ENCODE measurements at regions of chr4 and their contacts with region 1.

Region 1: GRCh38 chr4:88104902-88105610 is 53.4 kb downstream of the ABCG2 start:
- DNase-seq: no peak
- ATAC-seq: no peak
- H3K4me3 ChIP-seq: no peak overlapping the region
- H3K4me3 Mint-ChIP-seq: no peak overlapping the region
- H3K27ac ChIP-seq: no peak overlapping the region
- H3K27ac Mint-ChIP-seq: no peak overlapping the region
- H3K4me1 ChIP-seq: no peaks in the 10 kb centered on the region
- H3K4me1 Mint-ChIP-seq: no peaks in the 10 kb centered on the region
- H3K27me3 ChIP-seq: no peaks in the 10 kb centered on the region
- H3K27me3 Mint-ChIP-seq: peaks cover 3% of the 10 kb centered on the region
- CTCF ChIP-seq: no peak

Region 2: DNA sequence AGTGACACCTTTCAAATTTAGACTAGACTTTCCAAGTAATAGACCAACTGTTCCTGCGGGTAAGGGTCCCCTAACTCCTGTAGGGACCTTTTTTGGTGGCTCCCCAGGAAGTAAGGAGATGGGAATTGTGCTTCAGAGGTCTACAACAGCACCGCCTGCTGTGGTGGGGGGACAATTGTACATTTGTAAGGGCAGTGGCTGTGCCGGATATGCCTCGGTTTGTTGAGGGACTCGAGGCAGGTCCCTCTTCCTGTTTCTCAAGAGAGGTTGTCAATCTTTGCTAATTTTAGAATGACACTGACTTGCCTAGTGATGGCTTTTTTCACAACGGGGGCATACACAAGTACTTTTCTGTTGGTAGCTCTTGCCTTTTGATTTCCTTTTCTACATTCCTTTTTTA is 698.6 kb before region 1 on chr4:
- CTCF ChIA-PET with region 1: no interaction called
- POLR2A ChIA-PET with region 1: no interaction called
- intact Hi-C with region 1: no loop called
- DNase-seq: peak in 2 of 9 experiments; percentile 9 to 42
- ATAC-seq: peak; percentile 57
- H3K4me3 ChIP-seq: no peak overlapping the region
- H3K4me3 Mint-ChIP-seq: peak overlapping the region; percentile 69
- H3K27ac ChIP-seq: peak overlapping the region in 1 of 2 experiments; percentile 23
- H3K27ac Mint-ChIP-seq: peak overlapping the region; percentile 86
- H3K4me1 ChIP-seq: peaks cover 11% of the 10 kb centered on the region
- H3K4me1 Mint-ChIP-seq: peaks cover 22% of the 10 kb centered on the region
- H3K27me3 ChIP-seq: no peaks in the 10 kb centered on the region
- H3K27me3 Mint-ChIP-seq: peaks cover 23% of the 10 kb centered on the region
- CTCF ChIP-seq: no peak

Region 3: DNA sequence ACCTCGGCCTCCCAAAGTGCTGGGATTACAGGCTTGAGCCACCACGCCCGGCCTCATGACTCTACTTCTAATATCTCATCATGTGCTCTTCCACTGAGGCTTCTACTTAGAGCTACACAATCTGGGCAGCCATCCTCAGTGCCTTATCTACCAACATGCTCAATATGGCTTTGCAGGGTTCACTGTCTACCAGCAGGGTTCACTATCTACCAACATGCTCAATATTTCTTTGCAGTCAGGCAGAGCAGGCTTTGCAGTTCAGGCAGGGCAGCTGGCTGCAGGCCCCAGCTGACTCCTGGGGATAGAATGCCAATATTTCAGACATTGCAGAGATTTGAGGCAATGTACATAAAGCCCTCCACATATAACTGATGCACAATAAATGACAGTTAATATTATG is 50.2 kb before region 1 on chr4:
- CTCF ChIA-PET with region 1: no interaction called
- POLR2A ChIA-PET with region 1: no interaction called
- intact Hi-C with region 1: no loop called
- DNase-seq: peak in 1 of 9 experiments; percentile 2
- ATAC-seq: no peak
- H3K4me3 ChIP-seq: no peak overlapping the region
- H3K4me3 Mint-ChIP-seq: no peak overlapping the region
- H3K27ac ChIP-seq: no peak overlapping the region
- H3K27ac Mint-ChIP-seq: no peak overlapping the region
- H3K4me1 ChIP-seq: no peaks in the 10 kb centered on the region
- H3K4me1 Mint-ChIP-seq: no peaks in the 10 kb centered on the region
- H3K27me3 ChIP-seq: no peaks in the 10 kb centered on the region
- H3K27me3 Mint-ChIP-seq: no peaks in the 10 kb centered on the region
- CTCF ChIP-seq: no peak

Region 4: DNA sequence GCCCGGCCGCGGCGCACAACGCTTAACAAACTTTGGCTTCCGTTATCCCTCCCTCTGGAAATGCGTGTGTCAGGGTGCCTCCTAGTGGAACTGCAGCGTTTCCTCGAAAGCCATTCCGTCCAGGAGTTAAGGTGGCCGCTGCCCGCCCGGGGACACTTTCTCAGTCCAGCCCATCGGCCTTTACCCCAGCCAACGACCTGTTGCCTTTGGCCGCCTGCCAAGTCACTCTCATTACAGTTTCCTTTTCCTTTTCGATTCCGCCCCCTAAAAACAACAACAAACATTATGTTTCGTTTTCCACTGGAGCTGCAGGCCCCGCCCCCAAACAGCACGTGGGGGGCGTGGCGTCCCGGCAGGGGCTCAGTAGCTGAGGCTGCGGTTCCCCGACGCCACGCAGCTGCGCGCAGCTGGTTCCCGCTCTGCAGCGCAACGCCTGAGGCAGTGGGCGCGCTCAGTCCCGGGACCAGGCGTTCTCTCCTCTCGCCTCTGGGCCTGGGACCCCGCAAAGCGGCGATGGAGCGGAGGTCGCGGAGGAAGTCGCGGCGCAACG is 351.8 kb after region 1 on chr4 and contains the start of gene HERC5:
- CTCF ChIA-PET with region 1: no interaction called
- POLR2A ChIA-PET with region 1: no interaction called
- intact Hi-C with region 1: no loop called
- DNase-seq: peak; percentile 83 to 96 (median 91)
- ATAC-seq: peak; percentile 95
- H3K4me3 ChIP-seq: peak within 1 kb of the TSS; percentile 79 to 87
- H3K4me3 Mint-ChIP-seq: peak within 1 kb of the TSS; percentile 100
- H3K27ac ChIP-seq: peak within 1 kb of the TSS; percentile 63 to 74
- H3K27ac Mint-ChIP-seq: peak within 1 kb of the TSS; percentile 100
- H3K4me1 ChIP-seq: peaks cover 13% of the 10 kb centered on the region
- H3K4me1 Mint-ChIP-seq: peaks cover 33% of the 10 kb centered on the region
- H3K27me3 ChIP-seq: no peaks in the 10 kb centered on the region
- H3K27me3 Mint-ChIP-seq: no peaks in the 10 kb centered on the region
- CTCF ChIP-seq: no peak
- total RNA-seq, gene HERC5: 13.2 to 13.5 TPM

Region 5: DNA sequence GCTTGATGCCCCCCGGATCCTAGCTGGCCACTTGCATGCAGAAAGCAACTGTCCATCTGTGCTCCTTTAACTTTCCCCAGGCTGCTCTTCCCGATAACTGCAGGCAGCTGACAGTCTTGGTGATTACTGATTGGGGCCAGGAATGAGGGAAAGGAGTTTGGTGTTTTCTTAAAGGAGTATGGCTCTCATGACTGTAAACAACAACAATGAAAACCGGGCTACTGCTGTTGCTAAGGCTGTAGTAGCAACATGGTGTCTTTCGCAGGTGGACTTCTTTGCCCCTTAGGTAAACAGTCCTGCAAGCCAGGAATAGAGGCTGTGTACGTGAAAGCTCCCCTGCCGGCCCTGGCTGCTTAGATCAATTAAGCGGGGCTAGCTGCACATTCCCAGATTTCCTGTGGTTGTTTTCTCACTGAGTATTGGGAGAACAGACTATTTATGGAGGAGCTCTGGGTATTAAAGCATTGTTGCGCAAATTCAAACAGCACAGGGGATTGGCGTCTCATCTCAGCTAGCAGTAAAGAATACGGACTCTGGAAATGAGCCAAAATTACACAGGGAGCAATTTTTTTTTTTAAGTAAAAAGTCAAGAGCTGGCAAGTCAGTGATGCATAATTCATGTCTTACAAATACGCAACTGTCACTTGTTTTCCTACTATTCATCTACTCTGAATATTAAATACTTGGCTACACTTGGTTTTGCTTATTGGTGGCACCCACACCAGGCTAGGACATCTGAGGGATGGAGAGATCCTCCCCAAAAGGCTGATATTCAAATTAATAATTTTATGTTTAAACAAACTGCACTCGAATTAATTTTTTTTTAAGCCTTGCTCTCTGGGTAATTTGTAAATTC is 654.2 kb after region 1 on chr4:
- CTCF ChIA-PET with region 1: no interaction called
- POLR2A ChIA-PET with region 1: no interaction called
- intact Hi-C with region 1: loop called in 1 of 2 experiments (anchors 5 kb)
- DNase-seq: no peak
- ATAC-seq: no peak
- H3K4me3 ChIP-seq: no peak overlapping the region
- H3K4me3 Mint-ChIP-seq: no peak overlapping the region
- H3K27ac ChIP-seq: no peak overlapping the region
- H3K27ac Mint-ChIP-seq: no peak overlapping the region
- H3K4me1 ChIP-seq: no peaks in the 10 kb centered on the region
- H3K4me1 Mint-ChIP-seq: no peaks in the 10 kb centered on the region
- H3K27me3 ChIP-seq: no peaks in the 10 kb centered on the region
- H3K27me3 Mint-ChIP-seq: no peaks in the 10 kb centered on the region
- CTCF ChIP-seq: no peak

Measured in CD8-positive, alpha-beta T cell (primary cell).